ENCODE measurements at regions of chr3 and their contacts with region 1.

Region 1: DNA sequence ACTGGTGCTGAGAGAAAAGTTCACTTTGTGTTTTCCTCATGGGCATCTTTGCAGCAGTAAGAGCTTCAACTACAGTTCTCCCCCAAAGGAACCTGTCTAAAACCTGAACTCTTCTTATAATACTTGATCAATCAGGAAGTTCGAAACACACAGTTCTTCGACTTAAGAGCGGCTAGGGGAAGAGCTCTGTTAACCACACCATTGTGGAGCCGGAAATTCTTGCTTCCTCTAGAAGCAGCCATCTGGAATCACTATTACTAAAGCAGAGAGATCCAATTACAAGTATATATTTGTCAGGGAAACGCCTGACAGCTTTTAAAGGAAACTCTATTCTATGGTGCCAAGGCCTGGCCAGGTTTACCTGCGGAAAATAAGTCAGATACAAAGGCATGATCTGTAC is 337.3 kb upstream of the CBLB start:
- DNase-seq: peak; percentile 75
- H3K4me3 Mint-ChIP-seq: peak overlapping the region; percentile 65
- H3K27ac Mint-ChIP-seq: peak overlapping the region; percentile 97
- H3K4me1 Mint-ChIP-seq: peaks cover 39% of the 10 kb centered on the region
- H3K27me3 Mint-ChIP-seq: no peaks in the 10 kb centered on the region

Region 2: GRCh38 chr3:106183762-106184391 is 22.3 kb before region 1 on chr3:
- intact Hi-C with region 1: loop called (anchors 2 kb)
- DNase-seq: no peak
- H3K4me3 Mint-ChIP-seq: peak overlapping the region; percentile 9
- H3K27ac Mint-ChIP-seq: peak overlapping the region; percentile 21
- H3K4me1 Mint-ChIP-seq: peaks cover 42% of the 10 kb centered on the region
- H3K27me3 Mint-ChIP-seq: no peaks in the 10 kb centered on the region

Region 3: DNA sequence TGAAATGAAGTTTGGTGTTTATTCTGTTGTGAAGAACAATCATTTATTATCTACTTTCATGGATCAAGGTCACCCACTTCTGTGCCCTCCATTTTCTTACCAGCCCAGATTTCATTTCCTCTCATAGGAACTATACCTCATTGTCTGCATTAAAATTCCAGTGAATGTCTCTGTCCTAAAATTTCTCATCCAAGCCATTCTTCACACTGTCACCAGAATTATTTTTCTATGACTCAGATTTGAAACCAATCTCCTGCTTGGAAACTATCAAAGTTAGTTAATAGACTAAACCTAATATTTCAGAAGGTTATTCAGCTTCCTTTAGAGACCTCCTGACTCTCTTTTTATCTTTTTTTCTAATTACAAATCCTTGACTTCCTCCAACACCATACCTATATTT is 26.8 kb after region 1 on chr3:
- intact Hi-C with region 1: loop called (anchors 1 kb)
- DNase-seq: no peak
- H3K4me3 Mint-ChIP-seq: no peak overlapping the region
- H3K27ac Mint-ChIP-seq: no peak overlapping the region
- H3K4me1 Mint-ChIP-seq: peaks cover 42% of the 10 kb centered on the region
- H3K27me3 Mint-ChIP-seq: no peaks in the 10 kb centered on the region

Measured in activated CD4-positive, alpha-beta T cell treated with anti-CD3 and anti-CD28 coated beads, Interleukin-2, amount 10 ng/mL, durations not matched to agents 24 days and 14 days (primary cell).